A673 (cell line): ENCODE measurements at regions of chrX and their contacts with region 1.

Region 1: GRCh38 chrX:153494541-153495361 is at the start of gene BGN:
- DNase-seq: peak; percentile 62
- H3K4me3 ChIP-seq: peak within 1 kb of the TSS; percentile 39
- H3K27ac ChIP-seq: peak within 1 kb of the TSS; percentile 42
- H3K4me1 ChIP-seq: peaks cover 39% of the 10 kb centered on the region
- H3K27me3 ChIP-seq: no peaks in the 10 kb centered on the region
- CTCF ChIP-seq: peak; percentile 50
- total RNA-seq, gene BGN: 51.8 and 90.9 TPM in 2 replicates

Region 2: GRCh38 chrX:153470435-153471363 is 24.1 kb before region 1 on chrX and contains the start of gene HAUS7:
- CTCF ChIA-PET with region 1: interaction called, 9 read pairs
- POLR2A ChIA-PET with region 1: no interaction called
- intact Hi-C with region 1: loop called (anchors 2 kb)
- DNase-seq: peak; percentile 93
- H3K4me3 ChIP-seq: peak within 1 kb of the TSS; percentile 59
- H3K27ac ChIP-seq: peak within 1 kb of the TSS; percentile 51
- H3K4me1 ChIP-seq: peaks cover 5% of the 10 kb centered on the region
- H3K27me3 ChIP-seq: no peaks in the 10 kb centered on the region
- CTCF ChIP-seq: peak; percentile 81
- total RNA-seq, gene HAUS7: 75.3 and 82.6 TPM in 2 replicates